ENCODE measurements at regions of chr1 and their contacts with region 1.

Region 1: DNA sequence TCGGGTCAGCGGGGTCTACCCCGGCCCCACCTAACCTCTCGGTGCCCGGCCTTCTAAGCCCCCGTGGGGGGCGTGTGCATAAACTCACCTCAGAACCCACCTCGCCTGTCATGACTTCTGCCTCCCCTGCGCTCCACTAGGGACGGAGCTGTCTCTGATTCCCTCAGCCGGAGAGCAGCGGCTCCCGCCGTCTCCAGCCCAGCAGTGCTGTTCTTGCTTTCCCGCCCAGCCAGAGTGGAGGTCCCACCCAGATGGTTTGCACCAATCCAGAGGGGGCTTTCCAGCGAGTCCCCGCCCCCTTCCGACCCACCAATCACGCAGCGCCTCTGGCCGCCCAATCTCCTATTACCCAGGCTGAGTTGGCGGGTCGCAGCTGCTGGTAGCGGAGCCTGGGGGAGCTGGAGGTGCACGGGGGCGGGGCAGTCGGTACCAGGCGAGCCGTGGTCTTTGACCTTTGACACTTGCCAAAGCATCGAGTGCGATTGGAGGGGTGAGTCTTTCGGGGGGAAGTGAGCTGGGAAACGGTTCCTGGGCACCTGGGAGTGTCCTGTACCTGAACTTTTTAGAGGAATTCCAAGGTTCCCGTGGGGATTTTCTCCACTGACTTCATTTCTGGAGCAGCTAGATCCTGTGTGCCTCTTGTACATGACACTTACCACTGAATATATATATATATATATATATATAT is at the start of gene CLSPN:
- DNase-seq: peak; percentile 98
- H3K4me3 Mint-ChIP-seq: peak within 1 kb of the TSS; percentile 92
- H3K27ac Mint-ChIP-seq: peak within 1 kb of the TSS; percentile 97
- H3K4me1 Mint-ChIP-seq: peaks cover 8% of the 10 kb centered on the region
- H3K27me3 Mint-ChIP-seq: no peaks in the 10 kb centered on the region
- total RNA-seq, gene CLSPN: 49.9 to 55.1 TPM

Region 2: GRCh38 chr1:34852677-34853217 is 917.2 kb before region 1 on chr1:
- CTCF ChIA-PET with region 1: no interaction called
- POLR2A ChIA-PET with region 1: no interaction called
- intact Hi-C with region 1: loop called (anchors 10 kb)
- DNase-seq: peak; percentile 94
- H3K4me3 Mint-ChIP-seq: no peak overlapping the region
- H3K27ac Mint-ChIP-seq: peak overlapping the region; percentile 63
- H3K4me1 Mint-ChIP-seq: peaks cover 13% of the 10 kb centered on the region
- H3K27me3 Mint-ChIP-seq: no peaks in the 10 kb centered on the region

Region 3: GRCh38 chr1:35557292-35558063 is 212.4 kb before region 1 on chr1 and contains the starts of genes KIAA0319L and NCDN:
- CTCF ChIA-PET with region 1: no interaction called
- POLR2A ChIA-PET with region 1: interaction called, 10 read pairs
- intact Hi-C with region 1: no loop called
- DNase-seq: peak; percentile 98
- H3K4me3 Mint-ChIP-seq: peak within 1 kb of the TSS; percentile 97
- H3K27ac Mint-ChIP-seq: peak within 1 kb of the TSS; percentile 95
- H3K4me1 Mint-ChIP-seq: peaks cover 58% of the 10 kb centered on the region
- H3K27me3 Mint-ChIP-seq: no peaks in the 10 kb centered on the region
- total RNA-seq, gene KIAA0319L: 28.3 to 30.9 TPM
- total RNA-seq, gene NCDN: 21.6 to 21.7 TPM

Region 4: DNA sequence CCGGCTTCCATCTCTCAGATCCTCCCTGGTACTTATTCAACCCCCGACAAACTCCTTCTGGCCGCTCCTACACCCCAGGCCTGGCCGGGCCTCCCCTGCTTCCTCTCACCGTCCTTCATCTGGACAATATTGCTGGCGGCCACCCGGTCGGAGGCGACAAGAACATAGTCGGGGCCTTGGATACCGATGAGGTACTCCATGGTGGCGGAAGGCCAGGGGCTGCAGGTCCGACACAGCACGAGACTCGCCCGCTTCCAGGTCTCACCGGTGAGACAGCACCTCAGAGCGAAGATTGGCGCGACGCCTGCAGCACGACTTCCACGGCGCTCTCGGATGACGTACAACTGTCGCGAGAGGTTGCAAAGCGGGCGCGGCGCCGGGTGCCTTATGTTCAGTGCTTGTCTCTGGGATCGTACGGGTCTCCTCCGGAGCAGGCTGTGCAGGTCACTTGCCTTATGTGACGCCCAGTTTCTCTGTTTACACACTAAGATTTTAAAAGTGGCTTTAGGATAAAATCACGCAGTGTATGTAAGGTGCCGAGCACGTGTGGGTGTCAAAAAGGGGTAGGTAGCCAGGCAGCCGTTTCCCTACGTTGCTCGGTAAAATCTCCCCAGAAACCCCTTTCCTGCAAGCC is 128.6 kb before region 1 on chr1 and contains the start of gene PSMB2:
- CTCF ChIA-PET with region 1: no interaction called
- POLR2A ChIA-PET with region 1: interaction called, 4 read pairs
- intact Hi-C with region 1: loop called (anchors 5 kb)
- DNase-seq: peak; percentile 98
- H3K4me3 Mint-ChIP-seq: peak within 1 kb of the TSS; percentile 100
- H3K27ac Mint-ChIP-seq: peak within 1 kb of the TSS; percentile 100
- H3K4me1 Mint-ChIP-seq: peaks cover 29% of the 10 kb centered on the region
- H3K27me3 Mint-ChIP-seq: peaks cover 14% of the 10 kb centered on the region
- total RNA-seq, gene PSMB2: 88.1 to 91.5 TPM

Region 5: DNA sequence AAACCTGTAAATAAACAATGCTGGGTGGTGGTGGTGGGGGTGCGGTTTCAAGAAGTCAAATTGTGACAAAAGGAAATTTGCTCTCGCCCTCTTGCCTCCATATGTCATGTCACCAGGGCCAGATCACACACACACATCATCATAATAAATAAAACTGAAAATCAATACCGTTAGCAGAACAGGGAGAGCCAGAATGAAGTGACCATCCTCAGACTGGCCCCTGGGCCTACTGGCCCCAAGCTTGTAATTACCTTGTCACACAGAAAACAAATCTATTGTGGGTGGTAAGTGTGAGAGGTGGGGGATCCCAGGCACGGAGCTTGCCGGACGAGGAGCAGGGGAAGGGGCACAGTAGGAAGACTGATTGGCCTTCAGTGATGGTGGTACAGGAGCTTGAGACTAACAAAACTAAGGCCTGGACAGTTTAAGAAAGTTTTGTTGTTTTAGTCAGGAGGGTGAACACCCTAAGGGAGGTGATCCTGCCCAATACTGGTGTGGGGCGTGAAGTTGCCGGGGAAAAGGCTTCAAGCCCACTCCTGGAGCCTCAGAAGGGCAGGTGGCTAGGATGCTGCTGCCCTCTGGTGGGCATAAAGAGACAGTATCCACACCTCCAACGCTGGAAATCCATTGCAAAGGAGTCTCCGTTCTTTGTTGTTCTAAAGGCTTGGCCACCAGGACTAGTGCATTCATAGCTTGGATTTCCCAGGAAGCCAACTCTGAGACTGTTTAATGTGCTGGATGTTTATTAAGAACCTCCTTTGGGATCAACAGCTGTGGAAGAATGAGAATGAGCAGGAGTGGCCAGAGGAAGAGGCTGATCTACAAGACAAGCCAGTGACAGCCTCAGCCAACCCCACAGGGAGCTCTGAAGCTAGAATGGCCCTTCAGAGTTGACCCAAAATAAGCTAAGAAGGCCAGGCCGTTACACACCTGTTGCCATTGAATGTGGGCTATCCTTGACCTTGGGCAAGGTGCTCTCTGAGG is 43.2 kb before region 1 on chr1:
- CTCF ChIA-PET with region 1: interaction called, 18 read pairs
- POLR2A ChIA-PET with region 1: interaction called, 5 read pairs
- intact Hi-C with region 1: no loop called
- DNase-seq: peak; percentile 56
- H3K4me3 Mint-ChIP-seq: no peak overlapping the region
- H3K27ac Mint-ChIP-seq: no peak overlapping the region
- H3K4me1 Mint-ChIP-seq: no peaks in the 10 kb centered on the region
- H3K27me3 Mint-ChIP-seq: no peaks in the 10 kb centered on the region

Region 6: DNA sequence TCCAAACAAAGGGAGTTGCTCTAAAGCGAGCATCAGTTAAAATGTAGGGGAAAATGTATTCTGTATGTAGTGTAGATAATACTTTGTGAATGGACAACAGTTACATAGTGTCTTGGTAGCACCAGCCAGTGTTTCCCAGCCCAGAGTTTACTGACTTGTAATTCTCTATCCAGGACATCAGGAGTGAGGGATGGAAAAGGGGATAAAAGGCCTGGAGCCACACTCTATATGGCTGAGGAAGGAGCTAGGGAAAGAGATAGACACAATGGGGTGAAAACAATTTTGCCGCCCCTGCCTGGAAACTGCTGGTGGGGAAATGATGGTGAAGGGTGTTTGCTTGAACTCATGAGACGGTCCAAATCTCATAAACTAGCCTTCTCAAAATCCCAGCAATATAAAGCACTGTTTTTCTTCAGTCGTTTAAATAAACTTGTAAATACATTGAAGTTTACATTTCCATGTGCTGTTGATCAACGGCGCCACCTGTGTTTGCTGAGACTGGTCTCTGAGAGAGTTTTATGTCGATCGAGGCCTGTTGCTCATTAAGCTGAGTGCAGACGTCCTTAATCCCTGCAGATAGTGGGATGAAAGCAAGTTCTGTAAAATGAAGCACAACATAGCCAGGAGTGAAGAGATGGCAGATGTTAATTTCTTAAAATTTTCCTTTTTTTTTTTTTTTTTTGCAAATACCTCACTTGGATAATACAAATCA is 85.2 kb after region 1 on chr1:
- CTCF ChIA-PET with region 1: no interaction called
- POLR2A ChIA-PET with region 1: no interaction called
- intact Hi-C with region 1: no loop called
- DNase-seq: no peak
- H3K4me3 Mint-ChIP-seq: no peak overlapping the region
- H3K27ac Mint-ChIP-seq: no peak overlapping the region
- H3K4me1 Mint-ChIP-seq: no peaks in the 10 kb centered on the region
- H3K27me3 Mint-ChIP-seq: no peaks in the 10 kb centered on the region

Region 7: DNA sequence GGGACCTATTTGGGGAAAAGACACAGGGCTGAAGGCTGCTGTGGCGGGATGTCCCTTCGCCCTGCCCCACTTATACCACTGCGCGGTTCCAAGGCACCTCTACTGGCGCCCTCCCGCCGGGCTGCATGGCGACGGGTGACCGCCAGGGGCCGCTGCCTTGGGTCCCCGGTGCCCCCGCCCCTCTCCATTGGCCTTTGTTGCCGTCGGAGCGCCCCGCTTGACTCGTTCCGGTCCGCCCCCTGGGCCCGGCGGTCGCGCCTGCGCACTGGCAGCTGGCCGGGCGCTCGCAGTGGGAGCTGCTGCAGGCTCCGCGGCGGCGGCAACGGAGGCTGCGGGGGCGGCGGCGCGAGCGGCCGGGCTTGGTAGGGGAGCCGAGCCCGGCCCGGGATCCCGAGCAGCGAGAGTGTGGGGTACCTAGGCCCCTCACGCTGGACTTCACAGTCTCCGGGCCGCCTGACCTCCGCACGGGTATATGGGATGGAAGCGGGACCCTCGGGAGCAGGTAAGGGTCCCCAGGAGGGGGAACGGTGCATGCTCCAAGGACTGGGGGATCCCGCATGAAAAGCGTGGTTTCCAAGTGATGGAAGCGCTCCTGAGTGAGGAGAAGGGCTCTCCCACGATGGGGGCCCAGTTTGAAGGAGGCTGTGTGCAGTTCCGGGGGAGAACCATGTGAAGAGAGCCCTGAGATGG is 113.2 kb after region 1 on chr1 and contains the start of gene AGO1:
- CTCF ChIA-PET with region 1: interaction called, 12 read pairs
- POLR2A ChIA-PET with region 1: interaction called, 3 read pairs
- intact Hi-C with region 1: no loop called
- DNase-seq: peak; percentile 98
- H3K4me3 Mint-ChIP-seq: peak within 1 kb of the TSS; percentile 92
- H3K27ac Mint-ChIP-seq: peak within 1 kb of the TSS; percentile 61
- H3K4me1 Mint-ChIP-seq: peaks cover 46% of the 10 kb centered on the region
- H3K27me3 Mint-ChIP-seq: no peaks in the 10 kb centered on the region
- total RNA-seq, gene AGO1: 28.8 TPM